GM10248 (cell line): ENCODE measurements at regions of chr16 and their contacts with region 1.

Region 1: GRCh38 chr16:72561-73548 is at the start of gene RHBDF1:
- DNase-seq: peak; percentile 59
- CTCF ChIP-seq: no peak

Region 2: GRCh38 chr16:9903-10665 is 62.8 kb before region 1 on chr16:
- CTCF ChIA-PET with region 1: no interaction called
- POLR2A ChIA-PET with region 1: no interaction called
- DNase-seq: no peak
- CTCF ChIP-seq: no peak

Region 3: GRCh38 chr16:53346-54236 is 19.3 kb before region 1 on chr16 and contains the starts of genes POLR3K and SNRNP25:
- CTCF ChIA-PET with region 1: interaction called, 14 read pairs
- POLR2A ChIA-PET with region 1: no interaction called
- DNase-seq: peak; percentile 99
- CTCF ChIP-seq: no peak

Region 4: GRCh38 chr16:125011-125410 is 52.2 kb after region 1 on chr16:
- CTCF ChIA-PET with region 1: no interaction called
- POLR2A ChIA-PET with region 1: no interaction called
- DNase-seq: no peak
- CTCF ChIP-seq: no peak